CD8-positive, alpha-beta T cell (primary cell): ENCODE measurements at regions of chr7 and their contacts with region 1.

Region 1: DNA sequence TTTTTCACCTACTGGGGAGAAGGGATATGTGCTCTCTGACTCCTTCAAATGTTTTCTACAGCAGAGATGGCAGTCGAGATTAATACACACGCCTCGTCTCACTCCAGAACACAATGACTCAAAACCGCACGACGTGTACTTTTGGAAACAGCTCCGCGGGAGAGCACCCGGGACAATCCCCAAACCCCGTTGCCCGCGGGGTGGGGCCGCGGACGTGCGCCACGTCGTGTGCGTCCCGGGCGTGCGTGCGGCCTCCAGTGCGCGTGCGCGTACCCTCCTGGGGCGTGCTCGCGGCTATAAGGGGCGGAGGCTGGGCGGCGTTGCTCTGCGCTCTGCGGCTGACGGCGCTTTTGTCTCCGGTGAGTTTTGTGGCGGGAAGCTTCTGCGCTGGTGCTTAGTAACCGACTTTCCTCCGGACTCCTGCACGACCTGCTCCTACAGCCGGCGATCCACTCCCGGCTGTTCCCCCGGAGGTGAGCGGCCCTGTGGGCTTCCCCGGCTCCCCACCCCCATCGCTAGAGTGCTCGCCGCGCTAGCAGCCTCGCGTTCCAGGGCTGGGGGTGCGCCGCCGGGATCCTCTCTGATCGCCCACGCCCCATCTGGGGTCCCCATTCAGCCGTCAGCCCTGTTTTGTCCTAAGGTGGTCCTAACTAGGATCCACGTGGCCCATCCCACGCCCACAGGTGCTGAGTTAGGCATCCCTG is at the start of gene HILPDA:
- DNase-seq: peak; percentile 84 to 98 (median 93)
- ATAC-seq: peak; percentile 92
- H3K4me3 ChIP-seq: peak within 1 kb of the TSS; percentile 83 to 91
- H3K4me3 Mint-ChIP-seq: peak within 1 kb of the TSS; percentile 95
- H3K27ac ChIP-seq: peak within 1 kb of the TSS; percentile 60 to 73
- H3K27ac Mint-ChIP-seq: peak within 1 kb of the TSS; percentile 98
- H3K4me1 ChIP-seq: peaks cover 19% of the 10 kb centered on the region
- H3K4me1 Mint-ChIP-seq: peaks cover 26% of the 10 kb centered on the region
- H3K27me3 ChIP-seq: no peaks in the 10 kb centered on the region
- H3K27me3 Mint-ChIP-seq: no peaks in the 10 kb centered on the region
- CTCF ChIP-seq: no peak
- total RNA-seq, gene HILPDA: 1.3 to 2.0 TPM

Region 2: GRCh38 chr7:128335734-128336133 is 120.0 kb before region 1 on chr7:
- CTCF ChIA-PET with region 1: no interaction called
- POLR2A ChIA-PET with region 1: no interaction called
- intact Hi-C with region 1: no loop called
- DNase-seq: no peak
- ATAC-seq: no peak
- H3K4me3 ChIP-seq: no peak overlapping the region
- H3K4me3 Mint-ChIP-seq: no peak overlapping the region
- H3K27ac ChIP-seq: no peak overlapping the region
- H3K27ac Mint-ChIP-seq: no peak overlapping the region
- H3K4me1 ChIP-seq: no peaks in the 10 kb centered on the region
- H3K4me1 Mint-ChIP-seq: peaks cover 11% of the 10 kb centered on the region
- H3K27me3 ChIP-seq: no peaks in the 10 kb centered on the region
- H3K27me3 Mint-ChIP-seq: no peaks in the 10 kb centered on the region
- CTCF ChIP-seq: no peak

Region 3: GRCh38 chr7:128415217-128415785 is 40.4 kb before region 1 on chr7:
- CTCF ChIA-PET with region 1: interaction called, 35 read pairs
- POLR2A ChIA-PET with region 1: interaction called, 5 read pairs
- intact Hi-C with region 1: no loop called
- DNase-seq: no peak
- ATAC-seq: no peak
- H3K4me3 ChIP-seq: no peak overlapping the region
- H3K4me3 Mint-ChIP-seq: no peak overlapping the region
- H3K27ac ChIP-seq: no peak overlapping the region
- H3K27ac Mint-ChIP-seq: no peak overlapping the region
- H3K4me1 ChIP-seq: peaks cover 3% of the 10 kb centered on the region
- H3K4me1 Mint-ChIP-seq: peaks cover 3% of the 10 kb centered on the region
- H3K27me3 ChIP-seq: no peaks in the 10 kb centered on the region
- H3K27me3 Mint-ChIP-seq: no peaks in the 10 kb centered on the region
- CTCF ChIP-seq: no peak

Region 4: DNA sequence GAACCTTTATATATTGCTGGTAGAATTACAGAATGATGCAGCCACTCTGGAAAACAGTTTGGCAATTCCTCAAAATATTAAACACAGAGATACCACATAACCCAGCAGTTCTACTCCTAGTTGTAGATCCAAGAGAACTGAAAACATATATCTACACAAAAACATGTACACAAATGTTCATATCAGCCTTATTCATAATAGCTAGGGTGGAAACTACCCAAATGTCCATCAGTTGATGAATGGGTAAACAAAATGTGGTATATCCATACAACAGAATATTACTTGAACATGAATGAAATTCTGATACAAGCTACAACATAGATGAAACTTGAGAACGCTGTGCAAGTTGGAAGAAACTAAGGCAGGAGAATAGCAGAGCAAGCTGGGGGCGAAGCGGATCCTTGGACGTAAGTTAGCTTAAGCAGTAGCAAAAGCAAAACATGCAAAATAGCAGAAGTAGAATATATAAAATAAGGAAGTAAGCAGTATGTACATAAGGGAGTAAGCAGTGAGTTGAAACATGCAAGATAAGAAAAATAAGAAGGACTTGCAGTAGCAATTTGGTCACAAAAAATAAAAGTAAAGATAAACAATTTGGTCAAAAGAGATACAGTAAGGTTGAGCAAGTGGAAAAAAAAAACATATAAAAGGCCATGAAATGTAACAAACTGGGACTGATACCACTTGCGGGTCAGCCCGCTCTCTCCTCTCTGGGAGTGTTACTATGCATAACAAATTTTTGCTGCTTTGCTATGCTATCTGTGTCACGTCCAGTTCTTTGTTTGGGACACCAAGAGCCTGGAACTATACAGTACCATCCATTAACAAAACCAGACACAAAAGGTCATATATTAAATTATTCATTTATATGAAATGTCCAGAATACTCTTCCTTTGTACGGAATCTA is 18.0 kb before region 1 on chr7:
- CTCF ChIA-PET with region 1: interaction called, 325 read pairs
- POLR2A ChIA-PET with region 1: interaction called, 4 read pairs
- intact Hi-C with region 1: no loop called
- DNase-seq: no peak
- ATAC-seq: no peak
- H3K4me3 ChIP-seq: no peak overlapping the region
- H3K4me3 Mint-ChIP-seq: no peak overlapping the region
- H3K27ac ChIP-seq: no peak overlapping the region
- H3K27ac Mint-ChIP-seq: no peak overlapping the region
- H3K4me1 ChIP-seq: no peaks in the 10 kb centered on the region
- H3K4me1 Mint-ChIP-seq: no peaks in the 10 kb centered on the region
- H3K27me3 ChIP-seq: no peaks in the 10 kb centered on the region
- H3K27me3 Mint-ChIP-seq: peaks cover 3% of the 10 kb centered on the region
- CTCF ChIP-seq: no peak

Region 5: GRCh38 chr7:128812514-128813168 is 356.9 kb after region 1 on chr7:
- CTCF ChIA-PET with region 1: no interaction called
- POLR2A ChIA-PET with region 1: no interaction called
- intact Hi-C with region 1: no loop called
- DNase-seq: no peak
- ATAC-seq: no peak
- H3K4me3 ChIP-seq: no peak overlapping the region
- H3K4me3 Mint-ChIP-seq: no peak overlapping the region
- H3K27ac ChIP-seq: no peak overlapping the region
- H3K27ac Mint-ChIP-seq: no peak overlapping the region
- H3K4me1 ChIP-seq: no peaks in the 10 kb centered on the region
- H3K4me1 Mint-ChIP-seq: no peaks in the 10 kb centered on the region
- H3K27me3 ChIP-seq: no peaks in the 10 kb centered on the region
- H3K27me3 Mint-ChIP-seq: no peaks in the 10 kb centered on the region
- CTCF ChIP-seq: no peak